ENCODE measurements at regions of chr10 and their contacts with region 1.

Region 1: DNA sequence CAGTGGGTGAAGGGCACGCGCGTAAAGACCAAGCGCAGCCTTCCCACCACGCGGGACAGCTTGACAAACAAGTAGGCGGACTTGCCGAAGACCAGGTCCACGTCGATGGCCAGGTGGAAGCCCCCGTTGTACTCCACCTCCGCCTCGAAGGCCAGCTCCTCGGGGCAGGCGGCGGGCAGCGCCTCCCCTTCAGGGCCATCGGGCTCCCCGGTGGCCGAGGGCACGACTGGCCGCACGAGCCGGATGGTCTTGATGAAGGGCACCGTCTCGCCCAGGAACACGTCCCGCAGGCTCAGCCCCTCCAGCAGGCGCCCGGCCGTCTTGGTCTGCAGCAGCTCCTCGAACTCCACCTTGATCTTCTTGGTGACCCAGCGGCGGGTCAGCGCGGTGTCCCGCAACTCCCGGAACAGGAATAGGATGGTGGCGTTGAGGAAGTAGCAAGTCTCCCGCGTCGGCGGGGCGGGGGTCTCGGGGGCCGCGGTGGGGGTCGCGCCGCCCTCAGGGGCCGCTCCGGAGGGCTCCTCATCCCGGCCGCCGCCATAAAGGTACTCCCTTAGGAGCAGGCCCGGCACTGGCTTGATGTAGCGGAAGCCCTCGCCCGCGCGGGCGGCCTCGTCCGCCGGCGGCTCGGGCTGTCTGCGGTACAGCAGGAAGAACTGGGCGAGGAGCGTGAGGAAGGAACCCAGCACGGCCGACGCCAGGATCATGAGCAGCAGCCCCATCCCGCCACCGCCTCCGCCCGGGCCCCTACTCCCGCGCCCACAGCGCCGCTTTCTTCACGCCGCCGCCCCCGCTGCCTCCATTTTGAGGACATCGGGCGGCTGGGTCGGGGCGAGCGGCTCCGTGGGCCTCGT is 507 bp downstream of the PDZD8 start:
- DNase-seq: peak; percentile 45
- H3K4me3 Mint-ChIP-seq: peak overlapping the region; percentile 86
- H3K27ac Mint-ChIP-seq: peak overlapping the region; percentile 89
- H3K4me1 Mint-ChIP-seq: peaks cover 18% of the 10 kb centered on the region
- H3K27me3 Mint-ChIP-seq: peaks cover 9% of the 10 kb centered on the region
- CTCF ChIP-seq: no peak

Region 2: DNA sequence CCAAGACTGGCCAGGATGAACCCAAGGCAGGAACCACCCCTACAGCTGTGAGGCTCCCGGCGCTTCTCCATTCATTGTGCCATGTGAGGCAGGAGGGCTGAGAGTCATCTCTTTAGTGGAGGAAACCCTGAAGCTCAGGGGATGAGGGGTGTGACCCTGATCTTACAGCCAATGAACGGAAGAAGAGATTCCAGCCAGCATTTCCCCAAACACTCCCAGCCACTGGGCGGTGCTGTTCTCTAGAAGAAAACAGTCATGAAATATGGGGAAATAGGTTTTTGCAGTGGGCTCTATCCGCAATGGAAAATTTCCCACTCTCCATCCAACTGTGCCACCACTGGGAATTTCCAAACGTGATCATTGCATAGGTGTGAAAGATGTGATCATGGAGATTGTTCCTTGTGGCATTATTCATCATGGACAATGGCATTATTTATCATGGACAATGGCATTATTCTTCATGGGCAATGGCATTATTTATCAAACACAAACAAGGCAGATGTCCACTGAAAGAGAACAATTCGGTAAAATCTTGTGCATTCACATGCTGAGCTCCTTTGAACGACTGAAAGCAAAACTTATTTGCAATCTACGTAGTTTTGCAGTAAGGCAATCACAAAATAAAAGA is 147.8 kb before region 1 on chr10:
- CTCF ChIA-PET with region 1: no interaction called
- POLR2A ChIA-PET with region 1: no interaction called
- intact Hi-C with region 1: loop called (anchors 5 kb)
- DNase-seq: peak; percentile 64
- H3K4me3 Mint-ChIP-seq: no peak overlapping the region
- H3K27ac Mint-ChIP-seq: no peak overlapping the region
- H3K4me1 Mint-ChIP-seq: no peaks in the 10 kb centered on the region
- H3K27me3 Mint-ChIP-seq: peaks cover 55% of the 10 kb centered on the region
- CTCF ChIP-seq: peak; percentile 38

Region 3: GRCh38 chr10:117342641-117343040 is 32.1 kb before region 1 on chr10:
- CTCF ChIA-PET with region 1: interaction called, 6 read pairs
- POLR2A ChIA-PET with region 1: interaction called, 10 read pairs
- intact Hi-C with region 1: no loop called
- DNase-seq: peak; percentile 74
- H3K4me3 Mint-ChIP-seq: peak overlapping the region; percentile 11
- H3K27ac Mint-ChIP-seq: peak overlapping the region; percentile 68
- H3K4me1 Mint-ChIP-seq: peaks cover 43% of the 10 kb centered on the region
- H3K27me3 Mint-ChIP-seq: no peaks in the 10 kb centered on the region
- CTCF ChIP-seq: no peak

Region 4: GRCh38 chr10:117360994-117361667 is 13.6 kb before region 1 on chr10:
- CTCF ChIA-PET with region 1: interaction called, 5 read pairs
- POLR2A ChIA-PET with region 1: interaction called, 65 read pairs
- intact Hi-C with region 1: no loop called
- DNase-seq: peak; percentile 32
- H3K4me3 Mint-ChIP-seq: no peak overlapping the region
- H3K27ac Mint-ChIP-seq: no peak overlapping the region
- H3K4me1 Mint-ChIP-seq: peaks cover 33% of the 10 kb centered on the region
- H3K27me3 Mint-ChIP-seq: no peaks in the 10 kb centered on the region
- CTCF ChIP-seq: no peak

Region 5: DNA sequence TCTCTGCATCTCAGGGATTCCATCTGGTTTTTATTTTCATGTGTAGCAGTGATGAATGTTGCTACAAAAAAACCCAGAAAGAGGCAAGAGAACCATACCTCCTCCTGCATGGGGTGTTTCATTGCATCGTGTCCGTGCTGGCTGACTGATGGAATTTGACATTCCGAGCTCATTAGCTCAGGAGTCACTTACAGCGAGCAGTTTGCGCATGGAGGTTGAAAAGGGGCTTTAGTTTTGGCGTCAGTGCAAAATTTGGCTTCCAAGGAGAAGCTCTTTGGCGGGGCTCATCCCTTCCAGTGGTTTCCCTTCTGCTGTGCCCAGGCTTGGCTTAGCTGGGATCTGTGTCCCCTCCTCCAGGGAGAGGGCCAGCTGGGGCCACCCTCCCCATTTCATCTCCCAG is 193.6 kb after region 1 on chr10:
- CTCF ChIA-PET with region 1: no interaction called
- POLR2A ChIA-PET with region 1: no interaction called
- intact Hi-C with region 1: no loop called
- DNase-seq: no peak
- H3K4me3 Mint-ChIP-seq: no peak overlapping the region
- H3K27ac Mint-ChIP-seq: no peak overlapping the region
- H3K4me1 Mint-ChIP-seq: no peaks in the 10 kb centered on the region
- H3K27me3 Mint-ChIP-seq: peaks cover 48% of the 10 kb centered on the region
- CTCF ChIP-seq: no peak